ENCODE measurements at regions of chr5 and their contacts with region 1.

Region 1: GRCh38 chr5:7927466-7928375 is 58.8 kb downstream of the MTRR start:
- DNase-seq: peak; percentile 54
- H3K4me3 Mint-ChIP-seq: no peak overlapping the region
- H3K27ac Mint-ChIP-seq: no peak overlapping the region
- H3K4me1 Mint-ChIP-seq: peaks cover 2% of the 10 kb centered on the region
- H3K27me3 Mint-ChIP-seq: peaks cover 8% of the 10 kb centered on the region

Region 2: GRCh38 chr5:7897014-7897632 is 30.6 kb before region 1 on chr5:
- CTCF ChIA-PET with region 1: no interaction called
- POLR2A ChIA-PET with region 1: no interaction called
- intact Hi-C with region 1: no loop called
- DNase-seq: peak; percentile 43
- H3K4me3 Mint-ChIP-seq: no peak overlapping the region
- H3K27ac Mint-ChIP-seq: no peak overlapping the region
- H3K4me1 Mint-ChIP-seq: peaks cover 10% of the 10 kb centered on the region
- H3K27me3 Mint-ChIP-seq: no peaks in the 10 kb centered on the region

Region 3: GRCh38 chr5:7941692-7942091 is 14.0 kb after region 1 on chr5:
- CTCF ChIA-PET with region 1: interaction called, 31 read pairs
- POLR2A ChIA-PET with region 1: no interaction called
- intact Hi-C with region 1: no loop called
- DNase-seq: no peak
- H3K4me3 Mint-ChIP-seq: no peak overlapping the region
- H3K27ac Mint-ChIP-seq: no peak overlapping the region
- H3K4me1 Mint-ChIP-seq: no peaks in the 10 kb centered on the region
- H3K27me3 Mint-ChIP-seq: peaks cover 14% of the 10 kb centered on the region

Region 4: DNA sequence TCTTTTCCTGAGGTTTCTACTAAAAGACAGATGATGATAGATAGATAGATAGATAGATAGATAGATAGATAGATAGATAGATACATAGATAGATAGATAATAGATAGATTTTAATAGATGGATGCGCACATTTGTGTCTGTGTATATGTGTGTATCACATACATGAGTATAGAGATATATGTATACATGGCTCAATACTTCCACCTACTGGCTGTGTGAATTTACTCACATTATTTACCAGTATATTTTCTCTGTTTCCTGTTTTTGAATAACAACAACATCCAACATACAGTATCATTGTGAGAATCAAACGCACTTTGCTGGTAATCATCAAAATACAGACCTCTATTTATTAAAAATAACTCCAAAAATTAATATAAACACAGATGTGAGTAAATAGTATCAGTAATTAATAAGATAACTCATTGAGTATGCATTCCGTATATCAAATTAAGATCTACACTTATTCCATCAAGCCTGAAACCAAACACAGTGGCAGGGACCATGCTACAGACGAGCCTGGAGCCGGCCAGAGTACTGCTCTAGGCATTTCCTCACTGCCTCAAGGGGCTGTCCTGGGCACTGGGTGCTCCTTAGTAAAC is 1280.2 kb after region 1 on chr5:
- CTCF ChIA-PET with region 1: interaction called, 4 read pairs
- POLR2A ChIA-PET with region 1: no interaction called
- intact Hi-C with region 1: loop called (anchors 5 kb)
- DNase-seq: no peak
- H3K4me3 Mint-ChIP-seq: no peak overlapping the region
- H3K27ac Mint-ChIP-seq: no peak overlapping the region
- H3K4me1 Mint-ChIP-seq: no peaks in the 10 kb centered on the region
- H3K27me3 Mint-ChIP-seq: no peaks in the 10 kb centered on the region

Region 5: DNA sequence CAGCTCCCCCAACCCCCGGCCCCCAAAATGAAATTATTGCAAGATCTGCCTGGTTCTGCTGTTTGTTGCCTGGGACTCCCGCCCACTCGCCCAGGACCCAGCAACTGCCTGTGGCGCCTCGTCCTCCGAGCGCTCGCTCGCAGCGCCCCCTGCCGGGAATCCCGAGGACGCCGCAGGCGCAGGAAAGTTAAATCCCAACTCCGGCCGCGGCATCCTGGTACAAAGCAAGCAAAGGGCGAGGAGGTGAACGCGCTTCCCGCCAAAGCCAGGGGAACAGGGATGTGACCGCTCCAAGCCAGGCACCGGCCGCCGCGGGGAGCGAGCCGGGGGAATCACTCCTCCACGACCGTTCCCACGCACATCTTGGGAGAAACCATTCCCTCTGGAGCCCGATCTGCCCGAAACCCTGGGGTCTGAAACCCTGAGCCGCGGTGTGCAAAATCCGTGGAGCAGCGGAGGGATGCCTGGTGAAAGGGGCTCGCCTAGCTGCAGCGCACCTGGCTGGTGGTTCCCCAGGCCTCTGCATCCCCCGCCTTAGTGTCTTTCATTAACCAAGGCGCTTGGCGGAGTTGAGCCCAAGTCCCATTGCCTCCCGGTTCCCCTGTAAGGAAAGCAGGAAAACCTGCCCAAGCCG is 1616.9 kb after region 1 on chr5:
- CTCF ChIA-PET with region 1: no interaction called
- POLR2A ChIA-PET with region 1: no interaction called
- intact Hi-C with region 1: loop called (anchors 5 kb)
- DNase-seq: peak; percentile 69
- H3K4me3 Mint-ChIP-seq: peak overlapping the region; percentile 71
- H3K27ac Mint-ChIP-seq: no peak overlapping the region
- H3K4me1 Mint-ChIP-seq: peaks cover 7% of the 10 kb centered on the region
- H3K27me3 Mint-ChIP-seq: peaks cover 13% of the 10 kb centered on the region